PC-3 (cell line): ENCODE measurements at regions of chr10 and their contacts with region 1.

Region 1: GRCh38 chr10:91613411-91614253 is 19.2 kb downstream of the PPP1R3C start:
- DNase-seq: peak; percentile 93
- ATAC-seq: peak; percentile 83
- H3K4me3 ChIP-seq: peak overlapping the region; percentile 35; the same call in 1 of the 2 replicates
- H3K27ac ChIP-seq: peak overlapping the region; percentile 97
- H3K4me1 ChIP-seq: peaks cover 38% of the 10 kb centered on the region
- H3K27me3 ChIP-seq: no peaks in the 10 kb centered on the region
- CTCF ChIP-seq: no peak

Region 2: GRCh38 chr10:91590142-91590903 is 23.3 kb before region 1 on chr10:
- CTCF ChIA-PET with region 1: interaction called, 3 read pairs
- POLR2A ChIA-PET with region 1: interaction called, 5 read pairs
- intact Hi-C with region 1: loop called (anchors 1 kb)
- DNase-seq: peak; percentile 92
- ATAC-seq: peak; percentile 88
- H3K4me3 ChIP-seq: peak overlapping the region; percentile 36; the same call in 1 of the 2 replicates
- H3K27ac ChIP-seq: peak overlapping the region; percentile 98
- H3K4me1 ChIP-seq: peaks cover 46% of the 10 kb centered on the region
- H3K27me3 ChIP-seq: no peaks in the 10 kb centered on the region
- CTCF ChIP-seq: no peak

Region 3: DNA sequence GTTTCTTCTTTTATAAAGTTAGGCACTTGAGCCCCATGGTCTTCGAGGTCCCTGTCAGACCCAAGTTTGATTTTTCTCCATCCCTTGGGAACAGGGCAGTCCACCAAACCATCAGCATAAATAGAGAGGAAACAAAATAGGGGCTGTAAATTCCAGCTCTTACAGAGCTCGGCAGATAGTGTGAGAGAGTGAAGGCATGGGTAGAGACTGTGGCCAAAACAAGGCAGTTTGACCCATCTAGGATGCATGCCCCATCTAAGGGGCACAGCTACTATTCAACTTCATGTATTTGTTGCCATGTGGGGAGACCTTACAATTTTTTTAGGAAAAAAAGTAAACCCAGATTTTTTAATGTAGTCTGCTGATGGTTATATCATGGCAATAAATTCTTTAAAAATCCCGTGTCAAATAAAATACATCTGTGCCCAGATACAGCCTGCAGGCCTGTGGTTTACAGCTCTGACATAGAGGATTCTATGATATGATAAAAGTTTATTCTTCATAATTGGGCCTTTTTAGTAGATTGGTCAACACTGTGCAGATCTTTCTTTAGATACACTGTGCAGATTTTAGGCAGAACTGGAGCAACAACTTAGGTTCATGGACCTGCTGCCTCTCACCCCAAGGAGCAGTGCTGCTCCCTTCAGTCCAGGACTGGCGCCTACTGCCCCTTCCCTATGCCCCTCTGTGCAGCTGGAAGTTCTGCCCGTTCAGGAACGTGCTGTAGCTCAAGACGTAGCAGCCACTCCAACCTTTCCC is 13.9 kb after region 1 on chr10:
- CTCF ChIA-PET with region 1: no interaction called
- POLR2A ChIA-PET with region 1: no interaction called
- intact Hi-C with region 1: no loop called
- DNase-seq: no peak
- ATAC-seq: no peak
- H3K4me3 ChIP-seq: no peak overlapping the region
- H3K27ac ChIP-seq: no peak overlapping the region
- H3K4me1 ChIP-seq: no peaks in the 10 kb centered on the region
- H3K27me3 ChIP-seq: no peaks in the 10 kb centered on the region
- CTCF ChIP-seq: no peak